HepG2 (cell line): ENCODE measurements at regions of chr5 and their contacts with region 1.

Region 1: DNA sequence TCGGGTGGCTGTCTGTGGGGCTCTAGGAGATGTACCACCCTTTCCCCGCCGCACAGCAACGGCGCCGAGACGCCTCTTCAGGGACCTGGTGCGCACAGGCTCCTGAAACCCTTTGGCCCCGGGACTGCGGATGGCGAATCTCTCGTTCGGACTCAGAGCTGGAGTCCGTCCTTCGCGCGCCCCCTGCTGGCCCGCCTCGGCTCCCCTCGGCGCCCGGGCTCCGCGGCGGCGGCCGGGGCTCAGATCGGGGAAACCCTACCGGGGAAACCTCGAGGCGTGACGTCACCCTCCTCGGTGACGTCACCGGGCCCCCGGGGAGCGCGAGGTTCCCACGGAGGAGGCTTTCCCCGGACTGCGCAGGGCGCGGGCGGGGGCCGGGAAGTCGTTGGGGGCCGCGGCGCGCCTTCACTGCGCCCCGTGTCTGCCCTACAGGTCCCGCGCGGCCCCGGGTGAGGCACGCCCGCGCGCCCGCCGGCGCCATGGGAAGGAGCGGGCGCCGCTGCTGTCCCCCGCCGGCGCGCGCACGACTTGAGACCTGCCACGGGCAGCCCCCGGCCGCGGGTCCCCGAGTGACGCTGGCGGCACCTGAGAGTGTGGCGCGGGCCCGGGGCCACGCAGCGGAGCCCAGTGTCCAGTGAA is 7.9 kb downstream of the PRR7 start:
- DNase-seq: peak; percentile 79
- ATAC-seq: peak; percentile 54
- H3K4me3 ChIP-seq: peak overlapping the region; percentile 81 to 89 (median 87)
- H3K27ac ChIP-seq: peak overlapping the region; percentile 84
- H3K4me1 ChIP-seq: peaks cover 35% of the 10 kb centered on the region
- H3K27me3 ChIP-seq: no peaks in the 10 kb centered on the region; a peak in 1 of 5 replicates
- CTCF ChIP-seq: peak; percentile 85
- EP300 ChIP-seq: no peak
- POLR2A ChIP-seq: 0 out of 4 replicates have a peak, but pooled peaks of 1 of the 2 experiments have one; percentile 23
- RAD21 ChIP-seq: peak; percentile 97

Region 2: GRCh38 chr5:176466245-176466871 is 988.2 kb before region 1 on chr5:
- CTCF ChIA-PET with region 1: no interaction called
- POLR2A ChIA-PET with region 1: no interaction called
- in situ Hi-C with region 1: no loop called
- intact Hi-C with region 1: no loop called
- DNase-seq: peak; percentile 56
- ATAC-seq: peak; percentile 74
- H3K4me3 ChIP-seq: no peak overlapping the region
- H3K27ac ChIP-seq: peak overlapping the region; percentile 29
- H3K4me1 ChIP-seq: peaks cover 22% of the 10 kb centered on the region
- H3K27me3 ChIP-seq: no peaks in the 10 kb centered on the region
- CTCF ChIP-seq: no peak
- EP300 ChIP-seq: no peak
- POLR2A ChIP-seq: no peak
- RAD21 ChIP-seq: no peak

Region 3: GRCh38 chr5:177113566-177114424 is 340.7 kb before region 1 on chr5:
- CTCF ChIA-PET with region 1: interaction called, 4 read pairs
- POLR2A ChIA-PET with region 1: interaction called, 4 read pairs
- in situ Hi-C with region 1: loop called (anchors 25 kb)
- intact Hi-C with region 1: no loop called
- DNase-seq: peak; percentile 62
- ATAC-seq: peak; percentile 52
- H3K4me3 ChIP-seq: peak overlapping the region in 1 of 3 experiments; percentile 58; a peak in 1 of 6 replicates
- H3K27ac ChIP-seq: no peak overlapping the region
- H3K4me1 ChIP-seq: peaks cover 57% of the 10 kb centered on the region
- H3K27me3 ChIP-seq: no peaks in the 10 kb centered on the region
- CTCF ChIP-seq: peak; percentile 95
- EP300 ChIP-seq: no peak
- POLR2A ChIP-seq: no peak
- RAD21 ChIP-seq: peak; percentile 85

Region 4: DNA sequence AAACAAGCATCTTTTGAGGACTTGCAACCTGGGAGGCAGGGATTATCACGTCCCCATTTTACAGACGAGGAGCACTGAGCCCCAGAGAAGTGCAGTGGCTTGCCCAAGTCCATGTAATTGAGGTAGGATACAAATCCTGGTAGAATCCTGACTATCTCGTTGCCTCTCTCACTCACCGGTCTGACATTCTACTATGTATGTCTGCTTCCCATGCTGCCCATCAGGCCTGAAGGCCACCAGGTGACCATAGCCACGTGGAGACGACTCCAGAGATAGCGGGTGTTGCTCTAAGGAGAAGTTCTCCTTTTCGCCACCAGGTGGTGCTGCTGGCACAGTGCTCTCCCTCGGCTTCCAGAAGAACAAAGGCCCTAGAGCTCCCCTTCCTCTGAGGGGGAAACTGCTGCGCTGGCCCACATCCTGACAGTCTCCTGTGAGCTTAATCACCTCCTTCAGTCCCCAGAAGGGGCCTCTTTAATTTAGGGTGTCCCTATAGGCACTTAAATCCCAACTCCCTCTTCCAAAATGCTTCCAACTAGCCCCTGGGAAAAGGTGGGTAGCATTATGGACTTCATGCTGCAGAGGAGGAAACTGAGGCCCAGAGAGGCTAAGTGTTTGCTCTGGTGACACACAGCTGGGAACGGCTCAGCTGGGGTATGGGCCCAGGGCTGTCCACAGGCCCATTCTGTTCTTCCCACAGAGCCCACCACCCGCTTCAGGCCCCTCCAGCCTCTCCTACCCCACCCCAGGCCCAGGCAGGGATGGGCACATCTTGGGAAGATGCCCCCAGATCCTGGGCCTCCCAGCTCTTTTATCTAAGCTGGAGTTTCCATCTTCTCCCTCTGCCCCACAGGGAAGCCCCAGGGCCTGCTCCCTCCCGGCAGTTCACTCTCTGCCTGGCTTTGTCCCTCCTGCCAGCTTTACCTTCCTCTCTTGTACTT is 63.9 kb before region 1 on chr5:
- CTCF ChIA-PET with region 1: interaction called, 54 read pairs
- POLR2A ChIA-PET with region 1: interaction called, 18 read pairs
- in situ Hi-C with region 1: loop called (anchors 5 kb)
- intact Hi-C with region 1: loop called (anchors 1 kb)
- DNase-seq: peak; percentile 79
- ATAC-seq: peak; percentile 79
- H3K4me3 ChIP-seq: no peak overlapping the region; a peak in 1 of 6 replicates
- H3K27ac ChIP-seq: no peak overlapping the region
- H3K4me1 ChIP-seq: peaks cover 38% of the 10 kb centered on the region
- H3K27me3 ChIP-seq: peaks cover 4 to 47% of the 10 kb centered on the region in 2 experiments; a peak in 4 of 5 replicates
- CTCF ChIP-seq: peak; percentile 96
- EP300 ChIP-seq: no peak
- POLR2A ChIP-seq: no peak
- RAD21 ChIP-seq: peak; percentile 94

Region 5: GRCh38 chr5:177425801-177426565 is 28.5 kb before region 1 on chr5:
- CTCF ChIA-PET with region 1: interaction called, 5 read pairs
- POLR2A ChIA-PET with region 1: interaction called, 17 read pairs
- in situ Hi-C with region 1: no loop called
- intact Hi-C with region 1: no loop called
- DNase-seq: peak; percentile 100
- ATAC-seq: peak; percentile 94
- H3K4me3 ChIP-seq: peak overlapping the region; percentile 47 to 73 (median 62); a peak in 5 of 6 replicates
- H3K27ac ChIP-seq: peak overlapping the region; percentile 83
- H3K4me1 ChIP-seq: peaks cover 43% of the 10 kb centered on the region
- H3K27me3 ChIP-seq: peaks cover 0 to 14% of the 10 kb centered on the region in 2 experiments; a peak in 2 of 5 replicates
- CTCF ChIP-seq: no peak
- EP300 ChIP-seq: no peak
- POLR2A ChIP-seq: peak in 1 of 2 experiments; percentile 70; a peak in 1 of 4 replicates
- RAD21 ChIP-seq: peak; percentile 45; the same call in 1 of the 2 replicates

Region 6: GRCh38 chr5:177491429-177491945 is 37.0 kb after region 1 on chr5:
- CTCF ChIA-PET with region 1: interaction called, 14 read pairs
- POLR2A ChIA-PET with region 1: interaction called, 16 read pairs
- in situ Hi-C with region 1: no loop called
- intact Hi-C with region 1: loop called (anchors 2 kb)
- DNase-seq: peak; percentile 65
- ATAC-seq: peak; percentile 64
- H3K4me3 ChIP-seq: no peak overlapping the region
- H3K27ac ChIP-seq: no peak overlapping the region
- H3K4me1 ChIP-seq: peaks cover 28% of the 10 kb centered on the region
- H3K27me3 ChIP-seq: no peaks in the 10 kb centered on the region
- CTCF ChIP-seq: peak; percentile 83
- EP300 ChIP-seq: no peak
- POLR2A ChIP-seq: no peak
- RAD21 ChIP-seq: peak; percentile 93

Region 7: GRCh38 chr5:177546258-177546741 is 91.8 kb after region 1 on chr5:
- CTCF ChIA-PET with region 1: no interaction called
- POLR2A ChIA-PET with region 1: no interaction called
- in situ Hi-C with region 1: no loop called
- intact Hi-C with region 1: no loop called
- DNase-seq: peak; percentile 93
- ATAC-seq: peak; percentile 98
- H3K4me3 ChIP-seq: no peak overlapping the region
- H3K27ac ChIP-seq: peak overlapping the region; percentile 64
- H3K4me1 ChIP-seq: peaks cover 39% of the 10 kb centered on the region
- H3K27me3 ChIP-seq: no peaks in the 10 kb centered on the region
- CTCF ChIP-seq: peak; percentile 36
- EP300 ChIP-seq: peak in 1 of 2 experiments; percentile 33; a peak in 1 of 4 replicates
- POLR2A ChIP-seq: no peak
- RAD21 ChIP-seq: no peak

Region 8: DNA sequence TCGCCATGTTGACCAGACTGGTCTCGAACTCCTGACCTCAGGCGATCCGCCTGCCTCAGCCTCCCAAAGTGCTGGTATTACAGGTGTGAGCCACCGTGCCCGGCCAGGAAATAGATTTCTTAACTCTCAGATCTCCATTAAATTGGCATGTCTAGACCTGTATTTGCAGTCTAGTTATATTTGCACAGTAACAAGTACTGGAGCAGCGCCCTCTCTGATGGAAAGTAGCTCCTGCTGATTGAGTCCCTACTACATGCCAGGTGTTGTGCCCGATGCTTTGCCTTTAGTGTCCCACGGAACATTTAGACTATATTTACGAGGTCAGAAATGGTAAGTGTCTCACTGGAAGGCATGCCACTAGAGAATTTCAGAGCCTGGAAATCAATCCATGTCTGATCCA is 121.7 kb after region 1 on chr5:
- CTCF ChIA-PET with region 1: no interaction called
- POLR2A ChIA-PET with region 1: no interaction called
- in situ Hi-C with region 1: no loop called
- intact Hi-C with region 1: no loop called
- DNase-seq: peak; percentile 22
- ATAC-seq: peak; percentile 41; the same call in 1 of the 3 replicates
- H3K4me3 ChIP-seq: no peak overlapping the region
- H3K27ac ChIP-seq: no peak overlapping the region
- H3K4me1 ChIP-seq: no peaks in the 10 kb centered on the region
- H3K27me3 ChIP-seq: no peaks in the 10 kb centered on the region; a peak in 1 of 5 replicates
- CTCF ChIP-seq: 0 out of 2 replicates have a peak, but pooled peaks have one; percentile 19
- EP300 ChIP-seq: no peak
- POLR2A ChIP-seq: no peak
- RAD21 ChIP-seq: no peak